ENCODE measurements at regions of chr19 and their contacts with region 1.

Region 1: DNA sequence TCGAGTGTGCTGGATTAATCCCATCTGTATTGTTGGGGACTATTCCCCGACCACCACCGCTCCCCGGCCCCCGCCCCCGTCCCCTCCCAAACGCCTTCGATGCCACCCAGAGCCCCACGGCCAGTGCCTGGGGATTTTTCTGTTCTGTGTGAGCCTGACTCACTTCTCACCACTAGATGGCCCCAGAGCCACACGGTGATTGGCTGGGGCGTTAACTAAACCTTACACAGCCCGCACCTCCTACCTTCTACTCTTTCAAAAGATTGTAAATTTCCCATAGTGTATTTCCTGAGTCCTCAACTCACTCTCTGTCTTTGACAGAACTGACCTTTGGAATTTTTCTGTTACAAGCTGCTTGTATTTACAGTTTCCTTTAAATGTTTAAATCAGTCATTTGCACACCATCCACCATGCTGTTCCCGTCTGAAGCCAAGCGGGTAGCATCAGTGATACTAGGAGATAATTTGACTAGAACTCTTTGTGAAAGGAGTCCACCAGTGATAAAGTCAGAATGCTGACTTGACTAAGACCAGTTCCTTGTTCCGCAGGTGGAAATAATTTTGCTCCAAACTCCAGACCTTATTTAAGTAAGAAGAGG is 61.4 kb downstream of the RFX2 start:
- DNase-seq: peak; percentile 85
- ATAC-seq: peak; percentile 95 to 97
- H3K4me3 ChIP-seq: no peak overlapping the region
- H3K27ac ChIP-seq: peak overlapping the region; percentile 2
- H3K4me1 ChIP-seq: peaks cover 15% of the 10 kb centered on the region
- H3K27me3 ChIP-seq: no peaks in the 10 kb centered on the region
- CTCF ChIP-seq: peak; percentile 87

Region 2: GRCh38 chr19:5997371-5997770 is 51.5 kb before region 1 on chr19:
- intact Hi-C with region 1: no loop called
- DNase-seq: no peak
- ATAC-seq: no peak
- H3K4me3 ChIP-seq: no peak overlapping the region
- H3K27ac ChIP-seq: no peak overlapping the region
- H3K4me1 ChIP-seq: peaks cover 23% of the 10 kb centered on the region
- H3K27me3 ChIP-seq: no peaks in the 10 kb centered on the region
- CTCF ChIP-seq: no peak

Region 3: DNA sequence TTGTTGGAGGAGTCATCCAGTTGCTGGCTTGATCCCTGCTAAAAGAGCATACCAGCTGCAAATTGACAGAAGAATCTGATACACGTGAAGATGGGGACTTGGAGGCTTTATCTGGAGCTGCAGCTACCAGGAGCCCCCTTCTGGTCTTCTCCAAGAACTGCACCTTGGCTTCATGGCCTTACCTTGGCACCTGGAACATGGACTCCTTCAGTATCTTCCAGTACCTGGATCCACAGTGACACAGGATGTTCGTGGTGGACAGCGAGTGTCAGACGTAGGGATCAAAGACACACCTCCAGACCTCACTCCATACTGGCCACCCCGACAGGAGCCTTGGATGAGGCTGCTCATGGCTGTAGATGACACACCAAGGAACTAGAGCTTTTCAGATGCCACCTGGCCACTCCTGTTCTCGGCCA is 76.7 kb after region 1 on chr19:
- intact Hi-C with region 1: loop called (anchors 5 kb)
- DNase-seq: peak; percentile 66
- ATAC-seq: peak; percentile 92 to 93
- H3K4me3 ChIP-seq: no peak overlapping the region
- H3K27ac ChIP-seq: no peak overlapping the region
- H3K4me1 ChIP-seq: no peaks in the 10 kb centered on the region
- H3K27me3 ChIP-seq: no peaks in the 10 kb centered on the region
- CTCF ChIP-seq: peak; percentile 96

Measured in lower lobe of right lung (tissue), 2 donors.